ENCODE measurements at regions of chr3 and their contacts with region 1.

Region 1: GRCh38 chr3:115092220-115092791 is 54.8 kb downstream of the ZBTB20 start:
- DNase-seq: peak; percentile 87
- H3K4me3 Mint-ChIP-seq: no peak overlapping the region
- H3K27ac Mint-ChIP-seq: no peak overlapping the region
- H3K4me1 Mint-ChIP-seq: no peaks in the 10 kb centered on the region
- H3K27me3 Mint-ChIP-seq: no peaks in the 10 kb centered on the region

Region 2: DNA sequence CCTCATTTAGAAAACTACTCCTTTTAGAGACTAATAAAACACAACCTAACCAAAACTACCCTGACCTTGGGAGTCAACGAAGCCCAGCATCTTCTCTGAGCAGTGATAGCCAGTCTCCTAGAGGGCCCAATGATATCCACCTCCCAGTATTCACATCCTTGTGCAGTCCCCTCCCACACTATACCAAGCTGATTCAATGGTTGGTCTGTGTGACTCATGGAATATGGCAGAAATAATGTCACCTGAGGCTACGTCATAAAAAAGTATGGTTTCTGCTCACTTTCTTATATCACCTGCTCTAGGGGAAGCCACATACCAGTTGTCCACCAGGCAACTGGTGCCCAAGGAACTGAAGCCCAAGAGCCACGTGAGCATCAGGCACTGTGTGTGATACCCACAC is 1374.5 kb before region 1 on chr3:
- intact Hi-C with region 1: no loop called
- DNase-seq: no peak
- H3K4me3 Mint-ChIP-seq: no peak overlapping the region
- H3K27ac Mint-ChIP-seq: peak overlapping the region; percentile 46
- H3K4me1 Mint-ChIP-seq: peaks cover 9% of the 10 kb centered on the region
- H3K27me3 Mint-ChIP-seq: no peaks in the 10 kb centered on the region

Region 3: GRCh38 chr3:115169808-115170207 is 77.5 kb after region 1 on chr3:
- intact Hi-C with region 1: loop called (anchors 2 kb)
- DNase-seq: no peak
- H3K4me3 Mint-ChIP-seq: no peak overlapping the region
- H3K27ac Mint-ChIP-seq: no peak overlapping the region
- H3K4me1 Mint-ChIP-seq: peaks cover 12% of the 10 kb centered on the region
- H3K27me3 Mint-ChIP-seq: peaks cover 10% of the 10 kb centered on the region

Region 4: DNA sequence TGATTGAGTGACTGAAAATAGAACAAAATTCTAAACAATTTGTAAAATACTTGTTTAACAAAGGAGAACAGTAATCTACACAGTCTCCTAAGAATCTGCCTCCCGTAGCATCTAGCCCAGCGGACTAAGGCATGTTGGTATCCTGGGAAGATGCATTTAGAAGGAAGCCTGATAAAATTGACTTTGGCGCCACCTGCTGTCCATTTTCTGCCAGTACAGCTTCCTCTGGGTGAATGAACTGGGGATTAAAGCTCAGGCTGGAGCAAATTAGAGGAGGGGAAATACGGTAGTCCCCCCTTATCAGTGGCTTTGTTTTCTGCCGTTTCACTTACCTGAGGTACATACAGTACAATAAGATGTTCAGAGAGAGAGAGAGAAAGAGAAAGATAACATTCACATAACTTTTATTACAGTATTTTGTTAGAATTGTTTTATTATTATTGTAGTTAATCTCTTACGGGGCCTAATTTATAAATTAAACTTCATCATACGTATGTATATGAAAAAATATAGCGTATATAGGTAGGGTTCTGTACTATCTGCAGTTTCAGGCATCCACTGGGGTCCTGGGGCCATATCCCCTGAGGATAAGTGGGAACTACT is 722.6 kb after region 1 on chr3:
- intact Hi-C with region 1: loop called (anchors 1 kb)
- DNase-seq: peak; percentile 90
- H3K4me3 Mint-ChIP-seq: no peak overlapping the region
- H3K27ac Mint-ChIP-seq: no peak overlapping the region
- H3K4me1 Mint-ChIP-seq: no peaks in the 10 kb centered on the region
- H3K27me3 Mint-ChIP-seq: peaks cover 13% of the 10 kb centered on the region

Measured in activated CD4-positive, alpha-beta T cell treated with anti-CD3 and anti-CD28 coated beads, Interleukin-2, amount 10 ng/mL, durations not matched to agents 24 days and 14 days (primary cell).